Vagina (tissue), 2 donors: ENCODE measurements at regions of chr7 and their contacts with region 1.

Region 1: GRCh38 chr7:107725151-107725740 is 18.7 kb upstream of the CBLL1 start:
- DNase-seq: no peak
- H3K4me3 ChIP-seq: no peak overlapping the region
- H3K27ac ChIP-seq: no peak overlapping the region
- H3K4me1 ChIP-seq: no peaks in the 10 kb centered on the region
- H3K27me3 ChIP-seq: no peaks in the 10 kb centered on the region
- CTCF ChIP-seq: peak; percentile 71 to 83 (median 78)
- POLR2A ChIP-seq: no peak

Region 2: DNA sequence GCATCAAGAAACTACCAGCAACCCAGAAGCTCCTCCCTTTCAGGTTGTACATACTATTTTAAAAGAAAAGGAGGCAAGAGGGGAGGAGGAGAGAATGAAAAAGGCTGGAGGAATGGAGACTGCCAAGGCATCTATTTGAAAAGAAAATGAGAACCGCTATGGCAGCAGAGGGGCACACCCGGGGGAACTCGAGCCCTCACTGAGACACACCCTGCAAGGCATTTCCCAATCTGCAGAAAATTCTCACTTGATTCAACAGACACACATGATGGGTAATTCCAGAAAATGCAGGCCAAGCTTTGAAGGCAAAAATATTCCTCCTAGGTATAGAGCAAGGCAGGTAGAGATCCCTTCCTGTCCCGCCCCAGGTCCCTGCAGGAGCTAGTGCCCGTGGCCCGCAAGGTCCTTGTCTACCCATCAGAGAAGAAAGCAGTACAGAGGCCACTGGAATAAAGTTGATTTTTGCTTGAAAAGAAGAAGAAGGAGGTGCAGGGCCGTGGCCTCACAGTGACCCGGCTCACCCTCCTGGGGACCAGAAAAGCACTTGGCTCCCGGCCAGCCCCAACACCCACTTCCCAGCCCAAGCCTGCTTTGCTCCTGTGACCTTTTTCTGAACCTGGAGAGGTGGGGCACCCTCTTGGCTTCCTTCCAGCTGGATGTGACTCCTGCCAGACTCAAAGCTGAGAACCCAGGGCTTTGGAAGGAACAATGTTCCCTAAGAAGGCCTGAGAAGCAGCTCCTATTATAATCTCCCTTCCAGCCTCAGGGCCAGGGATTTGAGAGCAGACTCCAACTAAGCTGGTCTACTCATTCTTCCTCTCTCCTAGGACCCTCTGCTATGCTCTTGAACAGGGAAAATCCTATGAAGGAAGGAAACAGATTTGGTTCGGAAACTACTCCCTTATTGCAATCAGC is 866.4 kb before region 1 on chr7:
- intact Hi-C with region 1: no loop called
- DNase-seq: no peak
- H3K4me3 ChIP-seq: no peak overlapping the region
- H3K27ac ChIP-seq: no peak overlapping the region
- H3K4me1 ChIP-seq: peaks cover 13% of the 10 kb centered on the region
- H3K27me3 ChIP-seq: no peaks in the 10 kb centered on the region
- CTCF ChIP-seq: no peak
- POLR2A ChIP-seq: no peak

Region 3: GRCh38 chr7:107462740-107463444 is 262.4 kb before region 1 on chr7:
- intact Hi-C with region 1: loop called (anchors 10 kb)
- DNase-seq: no peak
- H3K4me3 ChIP-seq: no peak overlapping the region
- H3K27ac ChIP-seq: no peak overlapping the region
- H3K4me1 ChIP-seq: no peaks in the 10 kb centered on the region
- H3K27me3 ChIP-seq: no peaks in the 10 kb centered on the region
- CTCF ChIP-seq: peak; percentile 19 to 68 (median 61)
- POLR2A ChIP-seq: no peak

Region 4: GRCh38 chr7:107884066-107884818 is 159.0 kb after region 1 on chr7:
- intact Hi-C with region 1: no loop called
- DNase-seq: no peak
- H3K4me3 ChIP-seq: no peak overlapping the region
- H3K27ac ChIP-seq: no peak overlapping the region
- H3K4me1 ChIP-seq: peaks cover 6% of the 10 kb centered on the region
- H3K27me3 ChIP-seq: no peaks in the 10 kb centered on the region
- CTCF ChIP-seq: no peak
- POLR2A ChIP-seq: no peak